Endothelial cell of umbilical vein (primary cell): ENCODE measurements at regions of chr9 and their contacts with region 1.

Region 1: GRCh38 chr9:6305954-6306563 is 22.1 kb upstream of the TPD52L3 start:
- DNase-seq: peak; percentile 72
- H3K4me3 ChIP-seq: no peak overlapping the region
- H3K27ac ChIP-seq: no peak overlapping the region
- H3K4me1 ChIP-seq: no peaks in the 10 kb centered on the region
- H3K27me3 ChIP-seq: peaks cover 4 to 5% of the 10 kb centered on the region in 2 experiments
- CTCF ChIP-seq: peak; percentile 22 to 34
- POLR2A ChIP-seq: no peak

Region 2: DNA sequence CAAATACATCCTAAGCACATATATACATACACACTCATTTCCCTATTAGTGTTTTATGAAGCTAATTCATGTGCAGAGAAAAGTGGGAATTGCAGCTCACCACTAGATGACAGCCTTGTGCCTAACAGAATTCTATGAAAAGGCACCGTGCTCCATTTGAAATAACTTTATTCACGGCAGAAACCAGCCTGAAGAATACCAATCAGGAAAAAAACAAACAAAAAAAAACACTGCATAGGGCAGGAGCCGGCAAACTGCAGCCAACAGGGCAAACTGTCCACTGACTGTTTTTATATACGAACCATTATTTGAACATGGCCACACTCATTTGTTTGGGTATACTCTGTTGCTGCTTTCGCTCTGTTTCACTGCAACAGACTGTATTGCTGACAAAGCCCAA is 506.7 kb before region 1 on chr9:
- CTCF ChIA-PET with region 1: interaction called, 16 read pairs
- POLR2A ChIA-PET with region 1: no interaction called
- dilution Hi-C with region 1: no loop called
- intact Hi-C with region 1: loop called (anchors 2 kb)
- DNase-seq: peak; percentile 82
- H3K4me3 ChIP-seq: no peak overlapping the region
- H3K27ac ChIP-seq: no peak overlapping the region
- H3K4me1 ChIP-seq: peaks cover 2% of the 10 kb centered on the region
- H3K27me3 ChIP-seq: no peaks in the 10 kb centered on the region
- CTCF ChIP-seq: peak; percentile 61 to 71
- POLR2A ChIP-seq: no peak

Region 3: DNA sequence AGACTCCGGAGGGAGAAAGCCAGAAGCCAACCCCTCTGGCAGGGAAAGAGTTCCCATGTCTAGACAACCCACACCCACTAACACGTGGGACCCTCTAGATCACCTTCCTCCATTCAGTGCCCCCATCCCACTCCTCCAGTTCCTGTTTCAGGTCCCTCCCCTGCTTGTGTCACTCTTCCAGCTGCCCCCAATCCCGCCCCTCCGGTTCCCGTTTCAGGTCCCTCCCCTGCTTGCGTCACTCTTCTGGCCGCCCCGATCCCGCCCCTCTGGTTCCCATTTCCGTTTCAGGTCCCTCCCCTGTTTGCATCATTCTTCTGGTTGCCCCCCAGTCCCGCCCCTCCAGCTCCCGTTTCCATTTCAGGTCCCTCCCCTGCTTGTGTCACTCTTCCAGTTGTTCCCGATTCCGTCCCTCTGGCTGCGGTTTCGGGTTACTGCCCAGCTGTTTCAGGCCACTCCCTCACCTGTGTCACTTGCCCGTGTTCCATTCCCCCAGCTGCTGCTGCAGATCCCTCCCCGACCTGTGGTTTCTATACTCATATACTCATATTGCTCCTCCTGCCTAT is 225.8 kb before region 1 on chr9:
- CTCF ChIA-PET with region 1: interaction called, 18 read pairs
- POLR2A ChIA-PET with region 1: no interaction called
- dilution Hi-C with region 1: no loop called
- intact Hi-C with region 1: no loop called
- DNase-seq: peak; percentile 77
- H3K4me3 ChIP-seq: peak overlapping the region; percentile 12 to 40 (median 23)
- H3K27ac ChIP-seq: peak overlapping the region; percentile 17
- H3K4me1 ChIP-seq: no peaks in the 10 kb centered on the region
- H3K27me3 ChIP-seq: no peaks in the 10 kb centered on the region
- CTCF ChIP-seq: no peak
- POLR2A ChIP-seq: no peak

Region 4: DNA sequence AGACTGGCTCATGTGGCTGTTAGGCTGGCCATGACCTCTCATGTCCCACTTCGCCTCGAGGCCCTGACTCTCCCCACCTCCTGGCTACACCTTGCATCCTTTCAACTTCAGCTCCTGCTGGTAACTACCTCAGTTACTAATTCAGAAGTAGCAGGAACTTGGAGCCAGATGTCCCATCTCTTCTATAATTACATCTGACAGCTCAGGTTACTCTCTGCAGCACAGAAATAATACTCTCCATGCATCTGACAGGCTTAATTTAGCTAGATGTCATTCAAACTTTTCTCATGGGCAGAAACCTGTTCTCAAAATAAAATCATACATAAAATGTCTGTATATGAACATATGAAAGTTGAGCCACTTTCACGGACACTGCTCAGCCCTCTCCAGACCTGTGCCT is 182.6 kb before region 1 on chr9:
- CTCF ChIA-PET with region 1: interaction called, 10 read pairs
- POLR2A ChIA-PET with region 1: no interaction called
- dilution Hi-C with region 1: no loop called
- intact Hi-C with region 1: no loop called
- DNase-seq: no peak
- H3K4me3 ChIP-seq: no peak overlapping the region
- H3K27ac ChIP-seq: no peak overlapping the region
- H3K4me1 ChIP-seq: peaks cover 2% of the 10 kb centered on the region
- H3K27me3 ChIP-seq: no peaks in the 10 kb centered on the region
- CTCF ChIP-seq: no peak
- POLR2A ChIP-seq: no peak

Region 5: DNA sequence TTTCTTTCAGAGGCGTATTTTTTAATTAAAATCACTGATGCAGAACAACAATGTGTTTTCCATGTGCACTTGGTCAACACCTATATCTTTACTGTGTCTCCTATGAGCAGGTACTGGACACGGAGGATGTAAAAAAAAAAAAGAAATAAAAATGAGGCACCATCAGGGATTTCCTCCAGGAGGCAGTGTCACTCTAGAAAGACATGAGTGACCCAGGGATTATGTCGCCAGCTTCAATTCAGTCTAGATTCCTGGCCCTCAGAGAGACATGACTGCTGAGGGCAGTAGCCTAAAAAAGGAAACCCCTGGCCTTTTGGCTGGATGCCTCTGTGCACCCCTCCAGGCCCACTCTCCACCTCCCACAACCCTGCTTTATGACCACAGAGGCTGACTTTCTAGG is 108.7 kb before region 1 on chr9:
- CTCF ChIA-PET with region 1: interaction called, 198 read pairs
- POLR2A ChIA-PET with region 1: interaction called, 4 read pairs
- dilution Hi-C with region 1: no loop called
- intact Hi-C with region 1: loop called (anchors 1 kb)
- DNase-seq: peak; percentile 67
- H3K4me3 ChIP-seq: no peak overlapping the region
- H3K27ac ChIP-seq: no peak overlapping the region
- H3K4me1 ChIP-seq: peaks cover 18% of the 10 kb centered on the region
- H3K27me3 ChIP-seq: no peaks in the 10 kb centered on the region
- CTCF ChIP-seq: peak; percentile 29 to 42
- POLR2A ChIP-seq: no peak

Region 6: GRCh38 chr9:6575324-6576034 is 269.4 kb after region 1 on chr9:
- CTCF ChIA-PET with region 1: no interaction called
- POLR2A ChIA-PET with region 1: no interaction called
- dilution Hi-C with region 1: no loop called
- intact Hi-C with region 1: no loop called
- DNase-seq: no peak
- H3K4me3 ChIP-seq: no peak overlapping the region
- H3K27ac ChIP-seq: no peak overlapping the region
- H3K4me1 ChIP-seq: no peaks in the 10 kb centered on the region
- H3K27me3 ChIP-seq: peaks cover 0 to 11% of the 10 kb centered on the region in 2 experiments
- CTCF ChIP-seq: no peak
- POLR2A ChIP-seq: no peak